Activated CD8-positive, alpha-beta T cell treated with anti-CD3 and anti-CD28 coated beads for 36 hours (primary cell): ENCODE measurements at regions of chr15 and their contacts with region 1.

Region 1: DNA sequence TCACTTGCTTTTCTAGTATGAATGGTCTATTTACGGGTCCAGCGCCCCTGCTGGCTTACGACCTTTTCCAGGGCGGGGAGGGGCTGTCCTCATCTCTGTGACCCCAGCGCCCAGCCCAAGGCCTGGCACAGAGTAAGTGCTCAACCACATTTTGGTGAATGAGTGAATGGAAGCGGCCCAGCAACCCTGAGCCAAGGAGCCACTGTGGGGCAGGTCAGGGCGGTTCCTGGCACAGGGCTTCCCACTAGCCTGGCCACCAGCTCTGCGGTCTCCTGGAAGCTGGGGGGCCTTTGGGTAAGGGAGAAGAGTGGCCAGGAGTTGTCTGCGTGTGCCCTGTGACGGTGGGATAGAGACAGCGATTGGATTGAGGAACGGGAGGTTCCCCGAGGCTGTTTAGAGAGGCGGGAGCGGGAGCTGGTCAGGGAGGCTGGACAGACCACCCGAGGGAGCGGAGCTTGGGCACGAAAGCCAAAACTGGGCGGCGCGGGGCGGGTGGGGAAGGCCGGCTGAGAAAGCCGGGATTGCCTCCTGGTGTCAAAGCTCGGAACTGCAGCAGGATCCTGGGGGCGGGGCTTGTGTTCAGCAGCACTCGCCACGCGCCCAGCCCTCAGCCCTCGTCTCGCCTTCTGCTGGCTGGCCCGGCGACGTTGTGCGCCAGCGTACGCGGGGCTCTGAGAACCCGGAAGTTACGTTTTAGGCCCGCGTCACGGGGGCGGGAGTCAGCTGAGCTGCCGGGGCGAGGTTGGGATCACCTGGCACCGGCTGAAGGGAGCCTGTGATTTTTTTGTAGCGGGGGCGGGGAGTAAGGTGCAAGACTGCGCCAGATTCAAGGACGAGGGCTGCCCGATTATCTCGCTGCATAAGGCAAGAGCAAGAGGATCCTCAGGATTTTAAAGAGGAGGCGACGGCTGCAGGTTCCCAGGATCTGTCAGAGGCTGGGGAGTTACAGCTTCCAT is at the start of gene VPS18:
- DNase-seq: peak; percentile 99
- ATAC-seq: peak; percentile 99
- H3K4me3 Mint-ChIP-seq: peak within 1 kb of the TSS; percentile 94
- H3K27ac Mint-ChIP-seq: peak within 1 kb of the TSS; percentile 92
- H3K4me1 Mint-ChIP-seq: peaks cover 28% of the 10 kb centered on the region
- H3K27me3 Mint-ChIP-seq: no peaks in the 10 kb centered on the region
- CTCF ChIP-seq: peak; percentile 89
- total RNA-seq, gene VPS18: 6.1 TPM

Region 2: GRCh38 chr15:40593588-40594428 is 300.2 kb before region 1 on chr15 and contains the start of gene KNL1:
- CTCF ChIA-PET with region 1: interaction called, 13 read pairs
- POLR2A ChIA-PET with region 1: no interaction called
- intact Hi-C with region 1: no loop called
- DNase-seq: peak; percentile 95
- ATAC-seq: peak; percentile 87
- H3K4me3 Mint-ChIP-seq: peak within 1 kb of the TSS; percentile 83
- H3K27ac Mint-ChIP-seq: peak within 1 kb of the TSS; percentile 99
- H3K4me1 Mint-ChIP-seq: peaks cover 26% of the 10 kb centered on the region
- H3K27me3 Mint-ChIP-seq: peaks cover 5% of the 10 kb centered on the region
- CTCF ChIP-seq: no peak
- total RNA-seq, gene KNL1: 20.9 to 22.8 TPM

Region 3: GRCh38 chr15:40754883-40755811 is 138.9 kb before region 1 on chr15 and contains the start of gene RMDN3:
- CTCF ChIA-PET with region 1: interaction called, 3 read pairs
- POLR2A ChIA-PET with region 1: no interaction called
- intact Hi-C with region 1: loop called (anchors 10 kb)
- DNase-seq: peak; percentile 95
- ATAC-seq: peak; percentile 95
- H3K4me3 Mint-ChIP-seq: peak within 1 kb of the TSS; percentile 90
- H3K27ac Mint-ChIP-seq: peak within 1 kb of the TSS; percentile 99
- H3K4me1 Mint-ChIP-seq: peaks cover 27% of the 10 kb centered on the region
- H3K27me3 Mint-ChIP-seq: no peaks in the 10 kb centered on the region
- CTCF ChIP-seq: no peak
- total RNA-seq, gene RMDN3: 20.8 to 21.6 TPM

Region 4: DNA sequence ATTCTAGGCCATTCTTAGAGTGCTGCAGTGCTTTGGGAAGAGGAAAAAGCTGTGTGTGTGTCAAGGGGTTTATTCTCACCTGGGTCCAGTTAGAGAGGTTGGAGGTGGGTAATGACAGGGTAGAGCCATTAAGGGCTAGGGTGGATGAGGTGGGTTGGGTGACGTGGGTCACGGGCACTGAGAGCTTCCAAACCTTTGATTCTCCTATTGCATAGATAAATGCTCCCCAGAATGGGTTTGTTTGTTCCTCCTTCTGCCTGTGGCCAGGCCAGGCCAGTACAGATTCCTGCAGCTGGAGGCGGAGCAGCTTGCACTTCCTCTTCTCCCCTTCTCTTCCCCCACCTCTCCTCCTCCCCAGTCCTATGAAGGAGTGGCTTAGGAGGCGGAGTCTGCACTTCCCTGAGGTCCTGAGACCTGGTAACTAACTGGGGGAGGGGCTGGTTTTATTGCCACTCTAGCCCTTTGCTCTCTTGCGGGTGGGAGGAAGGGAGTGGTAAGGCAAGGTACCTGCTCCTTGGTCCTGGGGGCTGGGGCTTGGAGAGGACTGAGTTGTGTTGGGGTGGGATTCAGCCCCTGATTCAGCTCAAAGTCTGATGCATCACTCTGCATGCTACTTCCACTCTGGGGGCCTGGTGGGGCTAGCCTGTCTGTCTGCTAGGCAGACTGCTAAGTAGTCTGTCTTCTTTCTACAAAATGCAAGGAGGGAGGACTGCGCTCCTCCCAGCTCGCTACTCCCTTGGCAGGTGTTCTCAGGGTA is 46.6 kb before region 1 on chr15:
- CTCF ChIA-PET with region 1: interaction called, 10 read pairs
- POLR2A ChIA-PET with region 1: interaction called, 5 read pairs
- intact Hi-C with region 1: no loop called
- DNase-seq: no peak
- ATAC-seq: no peak
- H3K4me3 Mint-ChIP-seq: no peak overlapping the region
- H3K27ac Mint-ChIP-seq: no peak overlapping the region
- H3K4me1 Mint-ChIP-seq: peaks cover 11% of the 10 kb centered on the region
- H3K27me3 Mint-ChIP-seq: peaks cover 16% of the 10 kb centered on the region
- CTCF ChIP-seq: no peak

Region 5: GRCh38 chr15:40873625-40874561 is 20.1 kb before region 1 on chr15 and contains the start of gene RHOV:
- CTCF ChIA-PET with region 1: interaction called, 40 read pairs
- POLR2A ChIA-PET with region 1: interaction called, 4 read pairs
- intact Hi-C with region 1: no loop called
- DNase-seq: peak; percentile 63
- ATAC-seq: peak; percentile 79
- H3K4me3 Mint-ChIP-seq: peak within 1 kb of the TSS; percentile 77
- H3K27ac Mint-ChIP-seq: no peak within 1 kb of the TSS
- H3K4me1 Mint-ChIP-seq: peaks cover 22% of the 10 kb centered on the region
- H3K27me3 Mint-ChIP-seq: peaks cover 9% of the 10 kb centered on the region
- CTCF ChIP-seq: peak; percentile 35
- total RNA-seq, gene RHOV: 0.40 to 0.41 TPM

Region 6: GRCh38 chr15:40941528-40942336 is 47.7 kb after region 1 on chr15:
- CTCF ChIA-PET with region 1: interaction called, 32 read pairs
- POLR2A ChIA-PET with region 1: interaction called, 4 read pairs
- intact Hi-C with region 1: no loop called
- DNase-seq: peak; percentile 78
- ATAC-seq: peak; percentile 81
- H3K4me3 Mint-ChIP-seq: peak overlapping the region; percentile 79
- H3K27ac Mint-ChIP-seq: peak overlapping the region; percentile 74
- H3K4me1 Mint-ChIP-seq: peaks cover 34% of the 10 kb centered on the region
- H3K27me3 Mint-ChIP-seq: no peaks in the 10 kb centered on the region
- CTCF ChIP-seq: peak; percentile 63